ENCODE measurements at regions of chr15 and their contacts with region 1.

Region 1: GRCh38 chr15:43903864-43904290 is 77.1 kb downstream of the WDR76 start:
- DNase-seq: peak; percentile 7
- ATAC-seq: peak; percentile 97
- H3K4me3 ChIP-seq: no peak overlapping the region
- H3K27ac ChIP-seq: no peak overlapping the region
- H3K4me1 ChIP-seq: no peaks in the 10 kb centered on the region
- H3K27me3 ChIP-seq: no peaks in the 10 kb centered on the region
- CTCF ChIP-seq: peak; percentile 75 to 89 (median 82)
- EP300 ChIP-seq: no peak
- POLR2A ChIP-seq: no peak
- RAD21 ChIP-seq: peak; percentile 99

Region 2: GRCh38 chr15:44015545-44016305 is 111.8 kb after region 1 on chr15:
- CTCF ChIA-PET with region 1: interaction called, 10 read pairs
- POLR2A ChIA-PET with region 1: no interaction called
- RAD21 ChIA-PET with region 1: no interaction called
- SMC1A ChIA-PET with region 1: no interaction called
- in situ Hi-C with region 1: no loop called
- intact Hi-C with region 1: no loop called
- DNase-seq: no peak
- ATAC-seq: no peak
- H3K4me3 ChIP-seq: no peak overlapping the region
- H3K27ac ChIP-seq: no peak overlapping the region
- H3K4me1 ChIP-seq: no peaks in the 10 kb centered on the region
- H3K27me3 ChIP-seq: no peaks in the 10 kb centered on the region
- CTCF ChIP-seq: no peak
- EP300 ChIP-seq: no peak
- POLR2A ChIP-seq: no peak
- RAD21 ChIP-seq: no peak

Region 3: GRCh38 chr15:44215594-44215993 is 311.7 kb after region 1 on chr15:
- CTCF ChIA-PET with region 1: interaction called, 21 read pairs
- POLR2A ChIA-PET with region 1: no interaction called
- RAD21 ChIA-PET with region 1: interaction called, 6 read pairs
- SMC1A ChIA-PET with region 1: interaction called, 7 read pairs
- in situ Hi-C with region 1: loop called (anchors 5 kb)
- intact Hi-C with region 1: loop called (anchors 5 kb)
- DNase-seq: no peak
- ATAC-seq: no peak
- H3K4me3 ChIP-seq: no peak overlapping the region
- H3K27ac ChIP-seq: no peak overlapping the region
- H3K4me1 ChIP-seq: no peaks in the 10 kb centered on the region
- H3K27me3 ChIP-seq: no peaks in the 10 kb centered on the region
- CTCF ChIP-seq: no peak
- EP300 ChIP-seq: no peak
- POLR2A ChIP-seq: no peak
- RAD21 ChIP-seq: no peak